ENCODE measurements at regions of chr9 and their contacts with region 1.

Region 1: DNA sequence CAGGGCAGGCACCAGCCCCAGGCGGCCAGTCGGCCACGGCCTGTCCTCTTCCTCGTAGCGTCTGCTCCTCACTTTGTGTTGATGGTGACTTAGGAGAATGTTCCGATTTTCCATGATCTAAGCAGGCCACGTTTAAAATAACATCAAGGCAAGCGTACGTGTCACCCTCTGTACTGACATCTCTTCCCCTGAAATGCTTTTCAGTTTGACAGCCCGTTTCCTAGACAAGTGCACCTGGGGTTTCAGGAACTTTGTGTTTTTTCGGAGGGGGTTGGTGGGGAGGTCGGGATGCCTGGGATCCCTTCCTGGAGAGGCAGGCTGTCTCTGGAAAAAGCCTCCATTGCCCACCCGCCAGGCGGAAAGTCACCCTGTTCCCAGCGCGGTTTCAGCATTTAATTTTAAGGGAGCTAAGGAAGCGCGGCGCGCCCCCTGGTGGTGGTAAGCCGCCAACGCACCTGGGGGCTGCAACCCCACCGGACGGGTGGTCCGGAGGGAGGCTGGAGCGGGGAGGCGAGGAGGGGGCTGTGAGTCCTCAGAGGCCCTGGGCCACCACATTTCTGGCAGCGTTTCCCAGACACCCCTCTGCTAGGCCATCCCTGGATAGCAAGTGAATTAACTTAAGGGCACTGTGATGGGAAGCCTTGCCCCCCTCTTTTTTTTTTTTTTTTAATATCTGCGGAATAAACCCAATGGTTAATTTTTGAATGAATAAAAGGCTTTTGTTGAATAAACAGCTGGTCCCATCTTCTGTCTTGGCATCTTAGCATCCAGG is 29.5 kb upstream of the HMCN2 start:
- DNase-seq: peak; percentile 77
- H3K27ac ChIP-seq: peak overlapping the region; percentile 70
- CTCF ChIP-seq: peak; percentile 100

Region 2: GRCh38 chr9:130023144-130023787 is 212.8 kb before region 1 on chr9:
- CTCF ChIA-PET with region 1: no interaction called
- POLR2A ChIA-PET with region 1: no interaction called
- DNase-seq: no peak
- H3K27ac ChIP-seq: no peak overlapping the region
- CTCF ChIP-seq: no peak

Region 3: GRCh38 chr9:130107234-130107861 is 128.7 kb before region 1 on chr9:
- CTCF ChIA-PET with region 1: interaction called, 30 read pairs
- POLR2A ChIA-PET with region 1: no interaction called
- DNase-seq: peak; percentile 90
- H3K27ac ChIP-seq: no peak overlapping the region
- CTCF ChIP-seq: peak; percentile 97

Region 4: GRCh38 chr9:130145658-130146057 is 90.4 kb before region 1 on chr9:
- CTCF ChIA-PET with region 1: interaction called, 11 read pairs
- POLR2A ChIA-PET with region 1: no interaction called
- DNase-seq: no peak
- H3K27ac ChIP-seq: no peak overlapping the region
- CTCF ChIP-seq: no peak

Region 5: DNA sequence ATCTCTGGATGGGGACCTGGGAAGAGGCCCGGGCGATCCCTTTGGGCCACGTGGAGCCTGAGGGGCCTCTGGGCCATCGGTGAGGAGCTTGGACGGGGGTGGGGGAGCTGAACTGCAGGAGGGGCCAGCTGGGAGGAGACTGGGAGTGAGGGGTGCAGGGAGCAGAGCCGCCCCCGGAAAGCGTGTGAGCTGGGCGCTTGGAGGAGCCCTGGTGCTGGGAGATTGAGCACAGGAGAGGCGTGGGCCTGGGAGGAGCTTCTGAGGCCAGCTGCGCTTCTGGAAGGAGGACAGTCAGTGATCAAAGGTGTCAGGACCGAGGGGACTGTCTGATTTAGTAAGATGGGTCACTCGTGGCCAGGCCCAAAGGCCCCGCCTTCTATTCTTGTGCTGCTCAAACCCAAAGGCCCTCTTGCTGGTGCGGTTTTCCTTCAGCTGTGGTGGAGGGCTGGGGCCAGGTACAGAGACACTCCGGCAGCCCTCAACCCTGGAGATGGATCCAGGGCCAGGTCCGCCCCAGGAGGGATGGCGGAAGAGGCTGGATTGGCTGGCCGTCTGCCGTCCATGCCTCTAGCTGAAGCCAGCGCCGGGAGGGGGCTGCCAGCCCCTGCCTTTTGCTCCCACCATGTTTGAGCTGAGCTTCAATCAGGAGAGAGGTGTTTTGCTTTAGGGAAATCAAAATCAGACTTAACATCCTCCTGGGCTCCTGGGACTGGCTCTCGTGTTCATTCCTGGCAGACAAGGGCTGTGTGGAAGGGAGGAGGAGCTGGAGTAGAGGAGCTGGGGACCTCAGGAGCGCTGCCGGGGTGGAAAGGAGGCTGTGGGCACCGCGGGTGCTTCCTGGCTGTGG is 42.3 kb before region 1 on chr9:
- CTCF ChIA-PET with region 1: interaction called, 15 read pairs
- POLR2A ChIA-PET with region 1: no interaction called
- DNase-seq: no peak
- H3K27ac ChIP-seq: peak overlapping the region; percentile 86
- CTCF ChIP-seq: no peak

Region 6: GRCh38 chr9:130483371-130484303 is 247.6 kb after region 1 on chr9:
- CTCF ChIA-PET with region 1: no interaction called
- POLR2A ChIA-PET with region 1: no interaction called
- DNase-seq: no peak
- H3K27ac ChIP-seq: no peak overlapping the region
- CTCF ChIP-seq: no peak

Measured in RWPE1 (cell line).